Panc1 (cell line): ENCODE measurements at regions of chr9 and their contacts with region 1.

Region 1: GRCh38 chr9:135714242-135715055 is 12.5 kb downstream of the KCNT1 start:
- DNase-seq: no peak
- ATAC-seq: no peak
- H3K4me3 ChIP-seq: no peak overlapping the region
- H3K27ac ChIP-seq: no peak overlapping the region
- H3K4me1 ChIP-seq: no peaks in the 10 kb centered on the region
- H3K27me3 ChIP-seq: no peaks in the 10 kb centered on the region
- CTCF ChIP-seq: no peak

Region 2: DNA sequence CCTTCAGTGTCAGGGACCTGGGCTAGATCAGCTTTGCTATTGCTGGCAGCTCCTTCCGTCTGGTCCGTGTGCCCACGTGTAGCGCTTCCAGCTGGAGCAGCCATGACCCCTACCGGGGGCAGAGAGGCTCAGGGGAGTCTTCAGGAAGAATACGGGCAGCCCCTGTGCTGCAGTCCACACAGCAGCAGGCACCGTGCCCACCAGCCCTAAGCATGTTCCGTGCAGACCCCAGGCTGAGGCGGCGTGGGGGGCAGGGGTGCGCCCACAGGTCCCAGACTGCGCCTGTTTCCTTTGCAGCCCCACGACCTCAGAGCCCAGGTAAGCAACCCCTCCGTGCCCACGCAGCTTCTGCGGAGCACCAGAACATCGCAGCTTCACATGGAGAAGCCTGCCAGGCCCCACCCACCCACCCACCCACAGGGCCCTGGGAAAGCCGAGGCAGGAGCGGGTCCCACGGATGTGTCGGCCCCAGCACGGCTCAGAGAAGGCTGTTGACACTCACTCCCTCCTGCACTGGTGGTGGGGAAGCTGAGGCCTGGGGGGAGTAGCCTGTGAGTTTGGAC is 70.6 kb after region 1 on chr9:
- CTCF ChIA-PET with region 1: interaction called, 19 read pairs
- POLR2A ChIA-PET with region 1: no interaction called
- in situ Hi-C with region 1: no loop called
- intact Hi-C with region 1: no loop called
- DNase-seq: no peak
- ATAC-seq: no peak
- H3K4me3 ChIP-seq: no peak overlapping the region
- H3K27ac ChIP-seq: no peak overlapping the region
- H3K4me1 ChIP-seq: no peaks in the 10 kb centered on the region
- H3K27me3 ChIP-seq: no peaks in the 10 kb centered on the region
- CTCF ChIP-seq: no peak

Region 3: GRCh38 chr9:136855461-136856078 is 1141.1 kb after region 1 on chr9:
- CTCF ChIA-PET with region 1: no interaction called
- POLR2A ChIA-PET with region 1: interaction called, 11 read pairs
- in situ Hi-C with region 1: no loop called
- intact Hi-C with region 1: no loop called
- DNase-seq: no peak
- ATAC-seq: no peak
- H3K4me3 ChIP-seq: no peak overlapping the region
- H3K27ac ChIP-seq: no peak overlapping the region
- H3K4me1 ChIP-seq: peaks cover 41% of the 10 kb centered on the region
- H3K27me3 ChIP-seq: no peaks in the 10 kb centered on the region
- CTCF ChIP-seq: no peak